ENCODE measurements at regions of chr1 and their contacts with region 1.

Region 1: DNA sequence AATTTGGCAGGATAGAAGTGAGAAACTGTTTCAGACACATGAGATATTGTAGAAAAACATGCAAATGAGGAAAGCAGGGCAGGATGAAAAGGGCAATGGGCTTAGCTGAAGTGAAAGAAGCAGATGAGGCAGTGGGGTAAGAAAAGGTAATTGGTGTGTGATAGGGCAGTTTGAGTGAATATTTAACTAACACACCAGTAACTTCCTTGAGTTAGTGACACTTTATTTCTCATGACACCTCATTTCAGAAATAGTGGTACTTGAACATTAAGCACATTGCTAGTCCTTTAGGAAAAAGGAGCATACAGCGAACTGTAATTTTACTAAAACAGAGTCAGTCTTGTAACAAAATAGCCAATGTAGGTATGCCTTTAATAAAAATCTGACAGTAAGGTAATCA is 415.0 kb downstream of the DPYD start:
- DNase-seq: no peak
- ATAC-seq: no peak

Region 2: GRCh38 chr1:97308131-97308530 is 197.7 kb before region 1 on chr1:
- intact Hi-C with region 1: loop called in 1 of 2 experiments (anchors 10 kb)
- DNase-seq: no peak
- ATAC-seq: no peak

Region 3: GRCh38 chr1:97352854-97353483 is 152.8 kb before region 1 on chr1:
- intact Hi-C with region 1: no loop called
- DNase-seq: no peak
- ATAC-seq: no peak